ENCODE measurements at regions of chr10 and their contacts with region 1.

Region 1: DNA sequence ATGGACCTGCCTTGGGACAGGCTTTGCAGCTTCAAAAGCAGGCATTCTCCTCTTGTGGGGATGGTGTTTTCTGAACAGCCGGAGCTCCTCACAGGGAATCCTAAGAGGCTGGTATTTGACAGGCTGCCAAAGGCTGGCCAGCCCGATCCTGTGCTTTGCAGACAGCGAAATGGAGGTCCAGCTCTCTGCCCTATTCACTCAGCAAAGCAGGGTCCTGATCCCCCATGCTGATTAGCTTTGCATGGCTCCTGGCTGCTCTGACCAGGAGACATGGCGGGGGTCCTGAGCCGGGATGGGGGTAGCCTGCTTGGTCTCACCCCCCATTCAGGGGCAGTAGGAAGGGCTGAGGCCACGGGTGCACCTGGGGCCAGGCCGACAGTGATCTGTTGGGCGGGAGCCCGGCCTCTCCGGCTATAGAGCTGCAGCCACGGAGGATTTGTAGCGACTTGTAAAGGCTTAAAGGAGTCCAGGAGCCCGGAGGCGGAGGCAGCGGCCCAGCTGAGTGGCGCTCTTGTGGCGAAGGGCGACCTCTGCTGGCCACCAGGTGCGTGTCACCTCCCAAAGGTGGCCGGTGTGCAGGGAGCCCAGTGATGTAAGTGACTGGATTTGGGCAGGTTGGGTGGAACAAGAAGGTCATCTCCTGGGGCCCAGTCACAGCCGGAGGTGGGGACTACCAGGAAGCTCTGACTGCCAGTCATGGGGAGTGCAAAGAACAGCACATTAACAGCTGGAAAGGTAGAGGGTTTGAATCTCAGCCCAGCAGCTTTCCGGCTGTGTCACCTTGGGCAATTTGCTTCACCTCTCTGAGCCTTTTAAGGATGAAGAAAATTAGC is 126.5 kb downstream of the ZMIZ1 start:
- DNase-seq: peak; percentile 68
- ATAC-seq: peak; percentile 63
- H3K4me3 Mint-ChIP-seq: no peak overlapping the region
- H3K27ac Mint-ChIP-seq: no peak overlapping the region
- H3K4me1 Mint-ChIP-seq: peaks cover 14% of the 10 kb centered on the region
- H3K27me3 Mint-ChIP-seq: peaks cover 8% of the 10 kb centered on the region
- CTCF ChIP-seq: peak; percentile 98

Region 2: GRCh38 chr10:78029269-78030226 is 1165.8 kb before region 1 on chr10 and contains the start of gene POLR3A:
- CTCF ChIA-PET with region 1: interaction called, 3 read pairs
- POLR2A ChIA-PET with region 1: no interaction called
- intact Hi-C with region 1: loop called (anchors 1 kb)
- DNase-seq: peak; percentile 85
- ATAC-seq: peak; percentile 57
- H3K4me3 Mint-ChIP-seq: peak within 1 kb of the TSS; percentile 99
- H3K27ac Mint-ChIP-seq: peak within 1 kb of the TSS; percentile 88
- H3K4me1 Mint-ChIP-seq: peaks cover 43% of the 10 kb centered on the region
- H3K27me3 Mint-ChIP-seq: no peaks in the 10 kb centered on the region
- CTCF ChIP-seq: no peak
- total RNA-seq, gene POLR3A: 17.0 and 20.3 TPM in 2 replicates

Region 3: GRCh38 chr10:78302989-78303854 is 892.1 kb before region 1 on chr10:
- CTCF ChIA-PET with region 1: interaction called, 15 read pairs
- POLR2A ChIA-PET with region 1: no interaction called
- intact Hi-C with region 1: loop called (anchors 2 kb)
- DNase-seq: peak; percentile 96
- ATAC-seq: peak; percentile 87
- H3K4me3 Mint-ChIP-seq: peak overlapping the region; percentile 92
- H3K27ac Mint-ChIP-seq: peak overlapping the region; percentile 93
- H3K4me1 Mint-ChIP-seq: peaks cover 47% of the 10 kb centered on the region
- H3K27me3 Mint-ChIP-seq: no peaks in the 10 kb centered on the region
- CTCF ChIP-seq: peak; percentile 44

Region 4: DNA sequence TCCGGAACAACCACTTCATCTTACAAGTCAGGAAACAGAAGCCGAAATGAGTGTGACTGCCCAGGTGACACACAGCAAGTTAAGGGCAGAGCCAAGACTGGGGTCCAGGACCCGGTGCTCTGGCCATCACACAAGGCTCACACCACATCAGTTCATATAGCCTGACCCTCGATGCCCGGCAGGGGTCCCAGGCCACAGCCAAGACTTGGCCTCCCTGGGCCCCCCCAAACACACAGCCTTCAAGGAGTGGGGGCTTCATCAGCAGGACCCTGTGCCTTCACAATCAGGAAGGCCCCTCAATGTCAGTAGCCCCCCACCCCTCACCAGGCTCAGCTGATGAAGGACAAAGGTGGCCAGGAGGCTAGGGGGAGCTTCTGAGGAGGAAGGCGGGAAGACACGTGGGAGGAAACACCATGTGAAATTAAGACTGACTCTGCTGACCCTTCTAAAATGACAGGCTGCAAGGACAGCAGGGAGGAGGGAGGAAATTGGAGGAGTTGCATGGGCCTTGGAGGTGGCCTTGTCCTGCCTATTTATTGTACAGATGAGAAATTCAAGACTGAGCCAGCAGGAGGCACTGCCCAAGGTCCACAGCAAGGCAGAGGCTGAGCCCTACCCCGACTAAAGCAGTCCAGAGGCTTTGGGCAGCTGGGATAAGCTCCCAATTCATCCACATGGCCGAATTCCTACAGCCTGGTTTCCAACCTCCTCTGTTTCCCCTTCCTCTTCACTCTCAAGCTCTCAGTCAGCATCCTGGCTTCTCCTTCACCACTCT is 342.7 kb before region 1 on chr10:
- CTCF ChIA-PET with region 1: interaction called, 4 read pairs
- POLR2A ChIA-PET with region 1: no interaction called
- intact Hi-C with region 1: loop called (anchors 2 kb)
- DNase-seq: no peak
- ATAC-seq: no peak
- H3K4me3 Mint-ChIP-seq: no peak overlapping the region
- H3K27ac Mint-ChIP-seq: no peak overlapping the region
- H3K4me1 Mint-ChIP-seq: no peaks in the 10 kb centered on the region
- H3K27me3 Mint-ChIP-seq: peaks cover 8% of the 10 kb centered on the region
- CTCF ChIP-seq: no peak

Region 5: DNA sequence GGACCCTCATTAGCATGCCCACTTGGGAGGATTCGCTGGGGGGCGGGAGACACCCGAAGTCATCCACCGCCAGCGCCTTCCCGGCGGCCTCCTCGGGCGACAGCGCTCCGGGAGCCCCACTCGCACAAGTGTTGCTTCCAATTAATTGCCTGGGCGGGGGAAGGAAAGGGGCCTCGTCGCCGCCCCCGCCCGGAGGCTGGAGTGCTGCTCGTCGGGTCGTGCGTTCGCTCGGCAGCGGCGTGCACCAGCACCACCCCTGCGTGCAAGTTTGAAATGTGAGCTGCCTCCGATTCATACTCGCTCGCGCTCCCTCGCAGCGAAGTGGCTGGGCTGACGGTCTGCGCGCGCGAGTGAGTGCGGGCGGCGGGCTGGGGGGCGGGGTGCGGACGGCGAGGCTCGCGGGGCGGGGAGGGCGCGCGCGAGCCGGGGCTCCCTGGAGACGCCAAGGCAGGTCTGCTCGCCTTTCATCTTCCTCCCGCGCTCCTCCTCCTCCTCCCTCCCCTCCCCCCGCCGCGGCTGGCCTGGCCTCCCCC is 47.4 kb after region 1 on chr10:
- CTCF ChIA-PET with region 1: interaction called, 3 read pairs
- POLR2A ChIA-PET with region 1: interaction called, 4 read pairs
- intact Hi-C with region 1: loop called (anchors 2 kb)
- DNase-seq: peak; percentile 71
- ATAC-seq: peak; percentile 52
- H3K4me3 Mint-ChIP-seq: peak overlapping the region; percentile 84
- H3K27ac Mint-ChIP-seq: peak overlapping the region; percentile 50
- H3K4me1 Mint-ChIP-seq: peaks cover 57% of the 10 kb centered on the region
- H3K27me3 Mint-ChIP-seq: no peaks in the 10 kb centered on the region
- CTCF ChIP-seq: no peak